Vagina (tissue), 2 donors: ENCODE measurements at regions of chr5 and their contacts with region 1.

Region 1: GRCh38 chr5:112968411-112969106 is 8.0 kb upstream of the DCP2 start:
- DNase-seq: no peak
- H3K4me3 ChIP-seq: no peak overlapping the region
- H3K27ac ChIP-seq: no peak overlapping the region
- H3K4me1 ChIP-seq: no peaks in the 10 kb centered on the region
- H3K27me3 ChIP-seq: no peaks in the 10 kb centered on the region
- CTCF ChIP-seq: no peak
- POLR2A ChIP-seq: no peak

Region 2: GRCh38 chr5:112860929-112861637 is 107.5 kb before region 1 on chr5 and contains the start of gene SRP19:
- intact Hi-C with region 1: loop called (anchors 10 kb)
- DNase-seq: peak; percentile 96
- H3K4me3 ChIP-seq: peak within 1 kb of the TSS; percentile 87 to 99
- H3K27ac ChIP-seq: peak within 1 kb of the TSS; percentile 81
- H3K4me1 ChIP-seq: peaks cover 32% of the 10 kb centered on the region
- H3K27me3 ChIP-seq: no peaks in the 10 kb centered on the region
- CTCF ChIP-seq: no peak
- POLR2A ChIP-seq: peak in 1 of 2 donors; percentile 48
- total RNA-seq, gene SRP19: 30.9 TPM

Region 3: DNA sequence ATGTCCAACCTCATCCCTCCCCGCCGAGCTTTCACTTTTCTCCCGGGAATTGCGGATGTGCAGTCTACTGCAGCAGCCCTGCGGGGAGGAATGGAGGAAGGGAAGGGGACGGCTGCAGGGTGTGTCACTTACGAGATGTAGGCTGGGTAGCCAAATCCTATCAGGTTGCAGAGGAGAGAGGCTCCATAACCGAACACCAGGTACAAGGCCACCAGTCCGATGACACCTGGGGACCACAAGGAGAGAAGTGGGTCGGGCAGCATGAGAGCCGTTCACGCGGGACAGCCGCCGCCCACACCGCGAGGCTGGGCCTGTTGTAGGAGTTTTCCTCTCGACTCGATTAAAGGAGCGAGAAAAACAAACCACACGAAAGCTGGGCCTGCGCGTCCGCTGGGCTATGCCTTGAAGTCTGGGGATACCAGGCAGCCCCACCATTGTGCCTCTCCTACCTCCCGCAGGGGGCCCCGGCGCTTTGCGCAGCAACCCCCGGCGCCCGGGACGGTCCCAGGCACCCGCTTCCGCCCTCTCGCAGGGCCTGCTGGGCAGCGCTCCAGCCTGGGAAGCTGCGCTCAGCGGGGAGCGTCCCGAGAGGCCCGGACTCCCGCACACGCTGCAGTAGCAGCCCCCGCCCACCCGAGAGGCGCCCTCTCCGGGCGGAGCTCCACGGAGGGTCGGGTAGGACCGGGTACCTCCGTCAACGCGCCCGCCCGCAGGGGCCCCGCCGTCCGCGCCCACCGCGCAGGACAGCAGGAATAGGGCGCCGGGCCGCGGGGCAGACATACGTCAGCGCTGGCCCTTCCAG is 47.3 kb before region 1 on chr5:
- intact Hi-C with region 1: no loop called
- DNase-seq: peak in 1 of 2 donors; percentile 88
- H3K4me3 ChIP-seq: peak overlapping the region; percentile 83 to 87
- H3K27ac ChIP-seq: peak overlapping the region; percentile 89
- H3K4me1 ChIP-seq: peaks cover 58% of the 10 kb centered on the region
- H3K27me3 ChIP-seq: no peaks in the 10 kb centered on the region
- CTCF ChIP-seq: no peak
- POLR2A ChIP-seq: peak in 1 of 2 donors; percentile 23